RWPE1 (cell line): ENCODE measurements at regions of chr19 and their contacts with region 1.

Region 1: GRCh38 chr19:47243776-47244547 is 12.4 kb upstream of the CCDC9 start:
- DNase-seq: peak; percentile 86
- H3K27ac ChIP-seq: peak overlapping the region; percentile 83
- CTCF ChIP-seq: peak; percentile 98

Region 2: DNA sequence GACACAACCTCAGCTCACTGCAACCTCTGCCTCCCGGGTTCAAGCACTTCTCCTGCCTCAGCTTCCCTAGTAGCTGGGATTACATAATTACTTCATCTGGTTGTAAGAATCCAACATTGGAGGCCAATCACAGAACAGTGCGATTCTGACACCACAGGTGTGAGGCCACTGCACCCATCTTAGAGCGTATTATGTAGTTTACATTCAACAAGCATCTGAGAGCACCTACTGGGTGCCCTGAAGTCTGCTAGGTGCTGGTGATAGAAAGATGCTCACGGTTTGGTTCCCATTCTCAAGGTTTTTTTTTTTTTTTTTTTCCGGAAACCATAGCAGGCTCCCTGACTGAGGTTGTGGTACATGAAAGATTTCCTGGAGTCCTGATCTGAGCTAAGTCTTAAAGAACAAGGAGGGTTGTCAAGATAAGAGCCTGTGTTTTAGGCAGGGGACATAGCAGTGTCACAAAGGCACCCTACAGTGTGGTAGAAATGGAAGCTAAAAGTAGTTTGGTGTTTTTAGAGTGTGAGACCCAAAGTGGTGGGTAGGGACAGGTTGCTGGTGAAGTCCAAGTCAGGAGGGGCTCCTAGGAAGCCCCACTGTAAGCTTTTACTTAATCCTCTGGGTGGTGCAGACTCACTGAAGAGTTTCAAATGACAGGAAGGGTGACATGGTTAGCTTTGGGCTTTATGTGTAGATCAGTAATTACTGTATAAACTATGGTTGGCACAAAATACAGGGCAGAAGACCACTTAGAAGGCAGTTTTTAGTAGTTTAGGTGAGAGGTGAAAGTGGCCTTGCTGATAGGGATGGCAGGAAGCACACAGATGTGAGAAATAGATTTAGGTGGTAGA is 98.1 kb before region 1 on chr19:
- CTCF ChIA-PET with region 1: interaction called, 6 read pairs
- POLR2A ChIA-PET with region 1: interaction called, 10 read pairs
- DNase-seq: no peak
- H3K27ac ChIP-seq: no peak overlapping the region
- CTCF ChIP-seq: no peak

Region 3: DNA sequence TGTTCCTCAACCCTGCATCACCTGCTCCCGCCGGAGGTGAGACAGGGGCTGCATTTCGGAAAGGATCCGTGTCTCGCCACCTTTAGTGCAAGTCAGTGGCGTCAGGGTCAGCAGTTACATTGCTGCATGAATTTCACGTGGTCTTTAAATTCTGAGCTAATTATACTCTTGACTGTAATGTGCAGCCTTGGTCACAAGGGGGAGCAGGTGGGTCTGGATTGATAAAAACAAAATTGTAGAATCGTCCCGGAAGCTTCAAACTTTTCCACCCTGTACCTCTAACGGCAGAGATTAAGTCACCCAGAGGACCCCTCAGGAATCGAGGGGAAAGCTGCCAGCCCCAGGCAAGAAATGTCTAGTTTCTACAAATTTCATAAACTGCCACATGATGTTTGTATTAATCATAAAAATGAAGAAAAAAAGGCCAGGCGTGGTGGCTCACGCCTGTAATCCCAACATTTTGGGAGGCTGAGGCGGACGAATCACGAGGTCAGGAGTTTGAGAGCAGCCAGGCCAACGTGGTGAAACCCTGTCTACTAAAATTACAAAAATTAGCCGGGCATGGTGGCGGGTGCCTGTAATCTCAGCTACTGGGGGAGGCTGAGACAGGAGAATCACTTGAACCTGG is 33.2 kb before region 1 on chr19:
- CTCF ChIA-PET with region 1: interaction called, 77 read pairs
- POLR2A ChIA-PET with region 1: interaction called, 11 read pairs
- DNase-seq: peak; percentile 60
- H3K27ac ChIP-seq: peak overlapping the region; percentile 80
- CTCF ChIP-seq: peak; percentile 82

Region 4: DNA sequence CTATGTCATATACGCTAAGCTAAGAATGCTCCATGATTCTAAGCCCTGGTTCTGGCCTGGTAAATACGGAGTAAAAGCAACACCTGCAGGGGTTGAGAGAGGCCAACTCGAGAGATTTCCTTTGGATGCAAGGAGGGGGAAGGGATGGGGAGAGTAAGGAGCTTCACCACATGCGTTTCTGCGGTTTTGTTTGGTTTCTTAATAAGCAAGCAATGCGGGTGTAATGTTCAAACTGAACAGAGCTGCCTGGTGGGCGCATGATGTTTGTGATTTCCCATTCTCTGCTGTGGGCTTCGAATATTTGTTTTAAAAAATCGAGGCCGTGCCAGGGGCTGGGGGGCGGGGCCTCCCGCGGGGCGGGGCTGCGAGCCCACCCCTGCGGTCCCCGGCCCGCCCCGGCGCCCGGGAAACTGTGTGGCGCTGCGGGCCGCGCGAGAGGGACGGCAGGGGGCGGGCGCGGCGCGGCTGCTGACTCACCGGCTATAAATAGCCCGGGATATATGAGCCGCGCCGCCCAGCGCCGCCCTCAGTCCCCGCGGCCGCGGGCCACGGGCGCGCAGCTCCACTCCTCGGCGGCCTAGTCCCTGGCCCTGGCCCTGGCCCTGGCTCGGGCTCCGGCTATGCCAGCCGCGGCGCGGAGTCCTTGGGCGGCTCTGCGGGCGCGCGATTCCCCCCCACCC is 18.1 kb before region 1 on chr19:
- CTCF ChIA-PET with region 1: interaction called, 11 read pairs
- POLR2A ChIA-PET with region 1: interaction called, 8 read pairs
- DNase-seq: peak; percentile 87
- H3K27ac ChIP-seq: peak overlapping the region; percentile 99
- CTCF ChIP-seq: peak; percentile 36

Region 5: DNA sequence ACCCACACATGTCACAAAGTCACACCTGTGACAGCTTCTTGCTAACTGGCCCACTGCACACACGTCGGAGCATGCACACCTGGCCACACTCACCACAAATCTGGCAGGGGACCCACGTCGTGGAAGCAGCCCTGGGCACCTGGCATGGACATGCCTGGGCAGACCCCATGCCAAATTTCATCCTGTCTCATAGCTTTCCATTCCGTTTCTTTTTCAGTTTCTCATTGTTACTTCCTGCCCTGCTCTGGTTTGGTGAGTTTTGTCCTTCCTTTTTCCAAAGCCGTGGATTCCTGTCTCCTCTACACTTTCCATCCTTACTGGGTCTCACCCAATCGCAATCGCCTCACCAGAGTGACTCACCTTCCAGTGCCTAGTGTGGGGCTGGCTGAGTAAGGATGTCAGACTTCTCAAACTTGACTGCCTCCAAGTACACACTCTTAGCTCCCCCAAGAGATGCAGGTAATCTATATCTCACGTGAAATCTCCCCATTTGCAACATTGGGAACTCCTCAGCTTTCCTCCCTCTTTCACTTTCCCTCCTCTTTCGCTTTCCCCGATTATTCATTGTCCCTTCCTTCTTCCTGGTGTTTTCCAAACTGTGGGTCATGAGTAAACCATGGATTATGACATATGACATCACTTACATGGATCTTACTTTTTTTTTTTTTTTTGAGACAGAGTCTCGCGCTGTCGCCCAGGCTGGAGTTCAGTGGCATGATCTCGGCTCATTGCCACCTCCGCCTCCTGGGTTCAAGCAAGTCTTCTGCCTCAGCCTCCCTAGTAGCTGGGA is 11.3 kb before region 1 on chr19:
- CTCF ChIA-PET with region 1: interaction called, 15 read pairs
- POLR2A ChIA-PET with region 1: interaction called, 8 read pairs
- DNase-seq: peak; percentile 56
- H3K27ac ChIP-seq: peak overlapping the region; percentile 99
- CTCF ChIP-seq: no peak